CD8-positive, alpha-beta T cell (primary cell): ENCODE measurements at regions of chr12 and their contacts with region 1.

Region 1: GRCh38 chr12:101280006-101280505 is at the start of gene UTP20:
- DNase-seq: peak; percentile 84 to 96 (median 94)
- ATAC-seq: peak; percentile 100
- H3K4me3 ChIP-seq: peak within 1 kb of the TSS; percentile 98 to 100
- H3K4me3 Mint-ChIP-seq: peak within 1 kb of the TSS; percentile 96
- H3K27ac ChIP-seq: peak within 1 kb of the TSS; percentile 30 to 65
- H3K27ac Mint-ChIP-seq: peak within 1 kb of the TSS; percentile 80
- H3K4me1 ChIP-seq: peaks cover 11% of the 10 kb centered on the region
- H3K4me1 Mint-ChIP-seq: peaks cover 26% of the 10 kb centered on the region
- H3K27me3 ChIP-seq: peaks cover 0 to 4% of the 10 kb centered on the region in 2 experiments
- H3K27me3 Mint-ChIP-seq: peaks cover 6% of the 10 kb centered on the region
- CTCF ChIP-seq: no peak
- total RNA-seq, gene UTP20: 11.2 to 12.9 TPM

Region 2: GRCh38 chr12:101327547-101327946 is 47.5 kb after region 1 on chr12:
- CTCF ChIA-PET with region 1: no interaction called
- POLR2A ChIA-PET with region 1: no interaction called
- intact Hi-C with region 1: no loop called
- DNase-seq: no peak
- ATAC-seq: no peak
- H3K4me3 ChIP-seq: no peak overlapping the region
- H3K4me3 Mint-ChIP-seq: no peak overlapping the region
- H3K27ac ChIP-seq: no peak overlapping the region
- H3K27ac Mint-ChIP-seq: no peak overlapping the region
- H3K4me1 ChIP-seq: no peaks in the 10 kb centered on the region
- H3K4me1 Mint-ChIP-seq: no peaks in the 10 kb centered on the region
- H3K27me3 ChIP-seq: no peaks in the 10 kb centered on the region
- H3K27me3 Mint-ChIP-seq: no peaks in the 10 kb centered on the region
- CTCF ChIP-seq: no peak

Region 3: DNA sequence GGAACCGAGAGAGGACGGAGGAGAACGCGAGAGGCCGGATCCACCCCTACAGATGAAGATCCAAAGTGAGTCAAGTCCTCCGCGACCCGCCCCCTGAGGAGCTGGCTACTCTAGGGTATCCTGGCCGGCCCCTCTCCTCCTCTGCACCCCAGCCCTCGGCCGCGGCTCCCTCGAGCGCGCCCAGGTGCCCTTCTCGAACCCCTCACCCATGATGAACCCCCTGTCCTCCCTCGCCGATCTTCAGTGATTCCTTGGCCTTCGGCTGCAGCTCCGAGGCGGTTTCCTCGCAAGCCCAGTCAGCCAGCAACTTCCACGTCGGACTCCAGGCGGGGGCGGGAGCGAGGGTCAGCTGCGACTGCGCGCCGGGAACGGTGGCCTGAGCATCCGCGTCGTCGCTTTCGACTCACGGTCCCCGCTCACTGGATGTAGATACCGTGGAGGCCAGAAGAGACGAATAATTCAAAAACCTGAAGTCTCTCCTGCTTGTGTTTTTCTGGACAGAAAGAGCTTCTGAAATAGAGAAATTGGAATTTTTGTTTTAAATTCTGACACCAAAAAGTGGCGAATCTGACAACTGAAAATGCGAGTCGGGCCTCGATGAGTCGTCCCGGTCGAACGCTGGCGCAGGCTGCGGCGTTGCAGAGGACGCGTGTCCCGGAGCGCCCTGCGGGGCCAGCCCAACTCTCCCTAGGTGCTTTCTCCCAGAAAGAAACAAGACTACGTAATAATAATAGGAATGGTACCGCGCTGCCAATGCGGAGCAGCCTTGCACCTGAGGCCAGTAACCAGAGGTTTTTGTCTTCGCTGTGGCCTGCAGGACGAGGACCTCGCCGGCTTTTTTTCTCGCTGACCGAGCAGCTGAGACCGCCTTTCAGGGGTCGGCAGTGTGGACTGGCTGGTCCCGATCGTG is 127.6 kb after region 1 on chr12 and contains the start of gene ARL1:
- CTCF ChIA-PET with region 1: no interaction called
- POLR2A ChIA-PET with region 1: no interaction called
- intact Hi-C with region 1: loop called (anchors 1 to 5 kb)
- DNase-seq: peak; percentile 47 to 87 (median 76)
- ATAC-seq: peak; percentile 82
- H3K4me3 ChIP-seq: peak within 1 kb of the TSS; percentile 90 to 98
- H3K4me3 Mint-ChIP-seq: peak within 1 kb of the TSS; percentile 97
- H3K27ac ChIP-seq: peak within 1 kb of the TSS; percentile 84 to 85
- H3K27ac Mint-ChIP-seq: peak within 1 kb of the TSS; percentile 96
- H3K4me1 ChIP-seq: peaks cover 19% of the 10 kb centered on the region
- H3K4me1 Mint-ChIP-seq: peaks cover 32% of the 10 kb centered on the region
- H3K27me3 ChIP-seq: no peaks in the 10 kb centered on the region
- H3K27me3 Mint-ChIP-seq: no peaks in the 10 kb centered on the region
- CTCF ChIP-seq: no peak
- total RNA-seq, gene ARL1: 24.7 to 29.3 TPM

Region 4: GRCh38 chr12:101582937-101583336 is 302.9 kb after region 1 on chr12:
- CTCF ChIA-PET with region 1: no interaction called
- POLR2A ChIA-PET with region 1: no interaction called
- intact Hi-C with region 1: no loop called
- DNase-seq: no peak
- ATAC-seq: no peak
- H3K4me3 ChIP-seq: no peak overlapping the region
- H3K4me3 Mint-ChIP-seq: no peak overlapping the region
- H3K27ac ChIP-seq: no peak overlapping the region
- H3K27ac Mint-ChIP-seq: no peak overlapping the region
- H3K4me1 ChIP-seq: no peaks in the 10 kb centered on the region
- H3K4me1 Mint-ChIP-seq: no peaks in the 10 kb centered on the region
- H3K27me3 ChIP-seq: peaks cover 0 to 2% of the 10 kb centered on the region in 2 experiments
- H3K27me3 Mint-ChIP-seq: peaks cover 17% of the 10 kb centered on the region
- CTCF ChIP-seq: no peak

Region 5: GRCh38 chr12:101743724-101744472 is 463.8 kb after region 1 on chr12:
- CTCF ChIA-PET with region 1: no interaction called
- POLR2A ChIA-PET with region 1: no interaction called
- intact Hi-C with region 1: no loop called
- DNase-seq: peak in 4 of 9 experiments; percentile 7 to 70 (median 57)
- ATAC-seq: peak; percentile 81
- H3K4me3 ChIP-seq: no peak overlapping the region
- H3K4me3 Mint-ChIP-seq: no peak overlapping the region
- H3K27ac ChIP-seq: peak overlapping the region; percentile 3 to 59
- H3K27ac Mint-ChIP-seq: peak overlapping the region; percentile 63
- H3K4me1 ChIP-seq: peaks cover 6% of the 10 kb centered on the region
- H3K4me1 Mint-ChIP-seq: peaks cover 10% of the 10 kb centered on the region
- H3K27me3 ChIP-seq: no peaks in the 10 kb centered on the region
- H3K27me3 Mint-ChIP-seq: no peaks in the 10 kb centered on the region
- CTCF ChIP-seq: no peak

Region 6: DNA sequence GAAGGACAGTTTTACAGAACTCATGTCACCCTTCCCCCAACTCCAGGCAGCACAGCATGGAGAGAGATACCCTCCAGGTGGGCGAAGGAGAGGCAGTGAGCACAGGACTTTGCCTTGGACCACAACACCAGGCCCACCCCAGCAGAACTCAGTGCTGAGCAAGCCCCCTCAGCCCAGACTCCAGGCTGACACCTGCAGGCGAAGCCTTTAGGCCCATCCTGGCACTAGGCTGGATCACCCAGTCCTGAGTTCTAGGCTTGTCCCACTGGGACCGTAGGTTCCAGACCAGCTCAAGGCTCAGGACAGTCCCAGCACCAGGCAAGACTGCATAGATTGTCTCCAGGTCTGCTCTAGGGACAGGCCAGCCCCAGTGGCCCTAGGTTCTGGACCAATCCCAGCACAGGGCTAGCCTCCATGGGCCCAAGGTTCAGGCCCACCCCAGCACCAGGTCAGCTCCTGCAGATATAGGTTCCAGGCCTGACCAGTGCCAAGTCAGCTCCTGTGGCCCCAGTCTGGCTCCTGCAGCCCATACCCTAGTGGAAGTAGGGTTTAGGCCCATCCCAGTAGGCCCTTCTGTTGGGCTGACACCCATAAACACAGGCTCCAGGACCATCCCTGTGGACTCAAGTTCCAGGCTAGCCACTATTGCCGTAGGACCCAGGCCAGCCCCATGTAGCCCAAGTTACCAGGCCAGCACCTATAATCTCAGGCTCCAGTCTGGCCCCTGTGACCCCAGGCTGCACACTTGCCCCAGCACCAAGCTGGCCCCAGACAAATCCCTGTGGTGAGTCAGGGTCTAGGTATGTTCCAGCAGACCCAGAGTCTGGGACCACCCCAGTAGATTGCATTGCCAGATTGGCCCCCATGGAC is 772.4 kb after region 1 on chr12:
- CTCF ChIA-PET with region 1: no interaction called
- POLR2A ChIA-PET with region 1: no interaction called
- intact Hi-C with region 1: loop called in 1 of 2 experiments (anchors 5 kb)
- DNase-seq: peak in 1 of 9 experiments; percentile 2
- ATAC-seq: no peak
- H3K4me3 ChIP-seq: no peak overlapping the region
- H3K4me3 Mint-ChIP-seq: no peak overlapping the region
- H3K27ac ChIP-seq: no peak overlapping the region
- H3K27ac Mint-ChIP-seq: no peak overlapping the region
- H3K4me1 ChIP-seq: no peaks in the 10 kb centered on the region
- H3K4me1 Mint-ChIP-seq: peaks cover 38% of the 10 kb centered on the region
- H3K27me3 ChIP-seq: no peaks in the 10 kb centered on the region
- H3K27me3 Mint-ChIP-seq: no peaks in the 10 kb centered on the region
- CTCF ChIP-seq: no peak